Transverse colon (tissue), 4 donors: ENCODE measurements at regions of chr16 and their contacts with region 1.

Region 1: GRCh38 chr16:3983081-3983520 is 102.6 kb upstream of the CREBBP start:
- DNase-seq: peak; percentile 76
- H3K4me3 ChIP-seq: no peak overlapping the region
- H3K27ac ChIP-seq: no peak overlapping the region
- H3K4me1 ChIP-seq: peaks cover 0 to 8% (median 1%) of the 10 kb centered on the region in 4 donors
- H3K27me3 ChIP-seq: no peaks in the 10 kb centered on the region
- CTCF ChIP-seq: peak; percentile 62 to 84 (median 70)
- EP300 ChIP-seq: no peak
- POLR2A ChIP-seq: no peak

Region 2: GRCh38 chr16:4253394-4254150 is 270.5 kb after region 1 on chr16:
- in situ Hi-C with region 1: no loop called
- intact Hi-C with region 1: loop called (anchors 10 kb)
- DNase-seq: peak; percentile 100
- H3K4me3 ChIP-seq: peak overlapping the region; percentile 49 to 53 (median 52)
- H3K27ac ChIP-seq: peak overlapping the region; percentile 87 to 95 (median 92)
- H3K4me1 ChIP-seq: peaks cover 0 to 7% (median 0%) of the 10 kb centered on the region in 4 donors
- H3K27me3 ChIP-seq: no peaks in the 10 kb centered on the region
- CTCF ChIP-seq: no peak
- EP300 ChIP-seq: no peak
- POLR2A ChIP-seq: peak; percentile 91

Region 3: GRCh38 chr16:4544473-4544872 is 561.4 kb after region 1 on chr16:
- in situ Hi-C with region 1: no loop called
- intact Hi-C with region 1: no loop called
- DNase-seq: no peak
- H3K4me3 ChIP-seq: no peak overlapping the region
- H3K27ac ChIP-seq: no peak overlapping the region
- H3K4me1 ChIP-seq: peaks cover 0 to 3% (median 0%) of the 10 kb centered on the region in 4 donors
- H3K27me3 ChIP-seq: no peaks in the 10 kb centered on the region
- CTCF ChIP-seq: no peak
- EP300 ChIP-seq: no peak
- POLR2A ChIP-seq: no peak